GM23248 (cell line): ENCODE measurements at regions of chr1 and their contacts with region 1.

Region 1: GRCh38 chr1:147627435-147628110 is 42.8 kb downstream of the ACP6 start:
- DNase-seq: peak; percentile 57
- H3K4me3 ChIP-seq: no peak overlapping the region
- H3K27ac ChIP-seq: no peak overlapping the region
- H3K4me1 ChIP-seq: 0 out of 2 replicates have a peak, but pooled peaks cover 8% of the 10 kb centered on the region
- H3K27me3 ChIP-seq: no peaks in the 10 kb centered on the region

Region 2: DNA sequence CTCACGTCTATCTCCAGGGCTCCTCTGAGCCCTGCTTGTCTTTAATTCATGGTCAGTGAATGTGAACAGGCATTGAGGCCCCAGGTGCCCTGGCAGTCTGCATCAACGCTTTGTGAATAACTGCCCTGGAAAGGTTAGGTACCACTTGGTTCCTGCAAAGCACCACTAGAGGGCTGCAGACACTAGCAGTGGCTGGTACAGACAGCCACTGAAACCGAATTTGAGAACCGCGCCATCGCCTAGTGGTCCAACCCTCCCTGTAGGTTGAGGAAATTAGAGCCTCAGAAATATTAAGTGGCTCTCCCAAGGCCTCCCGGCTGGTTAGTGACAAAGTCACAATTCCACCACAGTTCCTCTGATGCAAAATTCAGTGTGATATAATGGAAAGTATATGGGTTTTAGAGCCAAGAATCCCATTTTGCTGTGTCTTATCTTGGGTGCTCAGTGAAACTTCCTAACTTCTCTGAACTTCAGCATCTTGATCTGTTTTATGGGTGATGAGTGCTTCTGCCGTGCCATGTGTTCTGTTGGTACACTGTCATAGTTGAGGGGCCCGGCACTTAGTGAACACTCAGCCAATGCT is 132.5 kb before region 1 on chr1:
- in situ Hi-C with region 1: loop called (anchors 10 kb)
- DNase-seq: peak; percentile 90
- H3K4me3 ChIP-seq: no peak overlapping the region
- H3K27ac ChIP-seq: no peak overlapping the region
- H3K4me1 ChIP-seq: no peaks in the 10 kb centered on the region
- H3K27me3 ChIP-seq: 0 out of 2 replicates have a peak, but pooled peaks cover 5% of the 10 kb centered on the region